ENCODE measurements at regions of chr5 and their contacts with region 1.

Region 1: GRCh38 chr5:31880449-31880848 is 241.5 kb downstream of the PDZD2 start:
- DNase-seq: no peak
- ATAC-seq: no peak
- H3K4me3 ChIP-seq: no peak overlapping the region
- H3K27ac ChIP-seq: no peak overlapping the region
- H3K4me1 ChIP-seq: no peaks in the 10 kb centered on the region
- H3K27me3 ChIP-seq: peaks cover 0 to 4% of the 10 kb centered on the region in 2 experiments; a peak in 2 of 5 replicates
- CTCF ChIP-seq: no peak
- EP300 ChIP-seq: no peak
- POLR2A ChIP-seq: no peak
- RAD21 ChIP-seq: no peak

Region 2: DNA sequence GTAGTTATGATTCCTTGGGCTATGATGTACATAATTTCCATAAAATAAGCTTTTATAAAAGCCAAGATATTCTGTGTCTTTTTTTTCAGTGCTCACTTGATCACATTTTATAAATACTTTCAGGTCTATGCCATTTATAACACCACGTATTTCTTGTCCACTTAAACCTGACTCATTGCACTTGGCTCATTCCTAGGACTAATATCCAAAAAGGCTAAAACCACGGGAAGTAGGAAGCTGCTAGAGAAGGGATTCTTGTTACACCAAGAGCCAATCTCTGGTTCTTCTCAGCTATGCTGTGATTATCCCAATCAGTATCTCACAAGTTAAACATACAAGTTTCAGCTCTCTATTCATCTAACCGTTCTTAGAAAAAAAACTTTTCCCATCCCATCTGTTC is 767.3 kb before region 1 on chr5:
- CTCF ChIA-PET with region 1: no interaction called
- POLR2A ChIA-PET with region 1: no interaction called
- in situ Hi-C with region 1: no loop called
- intact Hi-C with region 1: no loop called
- DNase-seq: no peak
- ATAC-seq: no peak
- H3K4me3 ChIP-seq: no peak overlapping the region
- H3K27ac ChIP-seq: no peak overlapping the region
- H3K4me1 ChIP-seq: no peaks in the 10 kb centered on the region
- H3K27me3 ChIP-seq: no peaks in the 10 kb centered on the region
- CTCF ChIP-seq: no peak
- EP300 ChIP-seq: no peak
- POLR2A ChIP-seq: no peak
- RAD21 ChIP-seq: no peak

Region 3: GRCh38 chr5:31833710-31834109 is 46.7 kb before region 1 on chr5:
- CTCF ChIA-PET with region 1: no interaction called
- POLR2A ChIA-PET with region 1: no interaction called
- in situ Hi-C with region 1: no loop called
- intact Hi-C with region 1: loop called (anchors 1 kb)
- DNase-seq: no peak
- ATAC-seq: no peak
- H3K4me3 ChIP-seq: no peak overlapping the region
- H3K27ac ChIP-seq: no peak overlapping the region
- H3K4me1 ChIP-seq: no peaks in the 10 kb centered on the region
- H3K27me3 ChIP-seq: no peaks in the 10 kb centered on the region; a peak in 1 of 5 replicates
- CTCF ChIP-seq: no peak
- EP300 ChIP-seq: no peak
- POLR2A ChIP-seq: no peak
- RAD21 ChIP-seq: no peak

Region 4: GRCh38 chr5:31894141-31894540 is 13.7 kb after region 1 on chr5:
- CTCF ChIA-PET with region 1: no interaction called
- POLR2A ChIA-PET with region 1: no interaction called
- in situ Hi-C with region 1: no loop called
- intact Hi-C with region 1: no loop called
- DNase-seq: no peak
- ATAC-seq: no peak
- H3K4me3 ChIP-seq: no peak overlapping the region
- H3K27ac ChIP-seq: no peak overlapping the region
- H3K4me1 ChIP-seq: no peaks in the 10 kb centered on the region
- H3K27me3 ChIP-seq: peaks cover 4 to 19% of the 10 kb centered on the region in 2 experiments; a peak in 3 of 5 replicates
- CTCF ChIP-seq: no peak
- EP300 ChIP-seq: no peak
- POLR2A ChIP-seq: no peak
- RAD21 ChIP-seq: no peak

Measured in HepG2 (cell line).